Activated naive CD4-positive, alpha-beta T cell treated with anti-CD3 and anti-CD28 coated beads for 36 hours (primary cell): ENCODE measurements at regions of chr1 and their contacts with region 1.

Region 1: DNA sequence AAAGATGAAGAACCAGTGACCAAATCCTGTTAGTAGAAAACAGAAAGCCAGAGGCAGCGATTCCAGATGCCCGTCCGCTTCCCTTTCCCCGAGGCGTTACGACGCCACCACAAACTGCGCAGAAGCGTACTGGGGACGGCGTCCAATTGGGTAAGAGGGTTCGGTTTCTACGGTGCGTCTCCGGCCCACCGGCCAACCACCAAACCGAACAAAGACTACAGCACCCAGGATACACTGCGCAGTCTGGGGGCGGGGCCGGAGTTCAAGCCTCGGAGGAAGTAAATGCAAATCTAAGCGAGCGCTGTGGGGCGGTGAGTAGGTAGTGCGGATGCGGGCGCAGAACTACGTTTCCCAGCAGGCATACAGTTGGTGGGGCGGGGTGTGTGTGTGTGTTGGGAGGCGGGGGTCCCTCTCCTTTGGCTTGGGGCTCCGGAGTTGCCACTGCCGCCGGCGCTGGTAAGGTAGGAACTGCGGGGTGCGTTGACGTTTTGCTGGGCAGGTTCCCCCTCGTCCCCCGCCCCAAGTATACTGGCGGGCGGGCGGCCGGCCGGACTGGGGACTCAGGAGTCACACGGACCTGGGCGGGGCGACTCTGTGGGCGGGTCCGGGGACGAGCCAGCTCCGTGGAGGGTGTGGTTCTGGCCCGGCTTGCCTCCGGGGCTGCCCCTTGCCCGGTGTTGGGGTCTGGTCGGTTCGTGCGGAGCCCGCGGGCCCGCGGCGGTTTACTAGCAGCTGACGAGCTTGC is at the starts of genes SWT1 and TRMT1L:
- DNase-seq: peak; percentile 98
- H3K4me3 Mint-ChIP-seq: peak within 1 kb of the TSS; percentile 92
- H3K27ac Mint-ChIP-seq: peak within 1 kb of the TSS; percentile 91
- H3K4me1 Mint-ChIP-seq: peaks cover 44% of the 10 kb centered on the region
- H3K27me3 Mint-ChIP-seq: no peaks in the 10 kb centered on the region
- total RNA-seq, gene SWT1: 1.7 to 2.9 TPM
- total RNA-seq, gene TRMT1L: 26.6 to 28.7 TPM

Region 2: DNA sequence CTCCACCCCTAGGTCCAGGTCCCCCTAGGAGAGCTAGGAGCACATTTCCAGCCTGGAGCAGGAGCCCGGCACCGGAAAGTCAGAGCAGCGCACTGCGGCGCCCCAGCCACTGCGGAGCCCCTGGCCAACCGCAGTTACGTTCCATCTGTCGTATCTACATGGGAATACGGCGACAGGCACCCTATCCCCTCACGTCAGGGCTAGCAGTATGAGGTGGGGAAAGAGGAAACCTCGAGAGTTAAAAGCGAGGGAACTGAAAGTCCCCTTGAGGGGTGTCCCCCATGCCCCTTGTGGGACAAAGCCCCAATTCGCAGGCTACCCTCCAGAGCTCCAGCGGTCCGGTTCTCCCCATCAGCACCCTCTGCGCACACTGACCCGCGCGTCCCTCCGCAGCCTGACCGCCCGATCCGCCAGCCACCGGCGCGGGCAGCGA is 1120.5 kb before region 1 on chr1:
- CTCF ChIA-PET with region 1: no interaction called
- intact Hi-C with region 1: loop called (anchors 5 kb)
- DNase-seq: peak; percentile 23
- H3K4me3 Mint-ChIP-seq: peak overlapping the region; percentile 58
- H3K27ac Mint-ChIP-seq: no peak overlapping the region
- H3K4me1 Mint-ChIP-seq: peaks cover 15% of the 10 kb centered on the region
- H3K27me3 Mint-ChIP-seq: peaks cover 68% of the 10 kb centered on the region

Region 3: GRCh38 chr1:184805667-184806295 is 351.2 kb before region 1 on chr1:
- CTCF ChIA-PET with region 1: interaction called, 6 read pairs
- intact Hi-C with region 1: loop called (anchors 5 kb)
- DNase-seq: peak; percentile 90
- H3K4me3 Mint-ChIP-seq: no peak overlapping the region
- H3K27ac Mint-ChIP-seq: peak overlapping the region; percentile 6
- H3K4me1 Mint-ChIP-seq: peaks cover 2% of the 10 kb centered on the region
- H3K27me3 Mint-ChIP-seq: no peaks in the 10 kb centered on the region

Region 4: DNA sequence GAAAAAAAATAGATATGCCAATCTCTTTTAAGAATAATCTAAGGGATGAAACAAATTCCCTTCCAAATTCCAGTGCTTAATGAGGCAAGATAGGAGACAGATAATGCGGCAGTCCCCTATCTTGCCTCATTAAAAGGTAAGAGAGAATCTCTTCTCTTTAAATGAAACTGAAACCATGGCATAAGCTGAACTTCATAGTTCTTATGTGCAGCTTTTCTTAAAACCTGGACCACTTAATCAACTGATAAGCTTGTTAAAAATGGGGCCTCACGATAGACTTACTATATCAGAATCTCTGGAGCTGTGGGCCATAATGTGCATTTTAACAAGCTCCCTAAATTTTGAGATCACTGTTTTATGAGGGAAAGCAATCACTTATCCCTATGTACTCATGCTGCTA is 261.9 kb before region 1 on chr1:
- CTCF ChIA-PET with region 1: no interaction called
- intact Hi-C with region 1: no loop called
- DNase-seq: no peak
- H3K4me3 Mint-ChIP-seq: no peak overlapping the region
- H3K27ac Mint-ChIP-seq: no peak overlapping the region
- H3K4me1 Mint-ChIP-seq: peaks cover 24% of the 10 kb centered on the region
- H3K27me3 Mint-ChIP-seq: peaks cover 9% of the 10 kb centered on the region

Region 5: GRCh38 chr1:185044981-185045813 is 111.8 kb before region 1 on chr1 and contains the start of gene RNF2:
- CTCF ChIA-PET with region 1: no interaction called
- intact Hi-C with region 1: loop called (anchors 1 kb)
- DNase-seq: peak; percentile 83
- H3K4me3 Mint-ChIP-seq: peak within 1 kb of the TSS; percentile 89
- H3K27ac Mint-ChIP-seq: peak within 1 kb of the TSS; percentile 69
- H3K4me1 Mint-ChIP-seq: peaks cover 30% of the 10 kb centered on the region
- H3K27me3 Mint-ChIP-seq: no peaks in the 10 kb centered on the region
- total RNA-seq, gene RNF2: 19.2 to 23.4 TPM

Region 6: DNA sequence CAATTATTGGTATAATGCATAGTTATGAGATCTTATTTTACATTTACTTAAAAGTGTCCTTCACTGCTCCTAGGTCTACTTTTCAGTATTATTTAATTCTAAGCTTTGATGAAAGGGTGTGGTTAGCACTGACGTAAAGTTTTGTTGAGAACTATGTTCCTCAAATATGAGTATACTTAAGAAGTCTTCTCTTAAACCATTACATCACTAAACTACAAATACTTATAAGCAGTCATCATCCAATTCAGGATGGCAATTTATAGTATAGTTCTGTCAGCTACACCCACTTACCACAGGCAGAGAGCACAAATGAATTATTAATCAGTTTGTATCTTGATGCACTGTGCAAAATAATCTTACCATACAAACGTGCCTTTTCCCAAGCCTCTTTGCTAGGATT is 27.3 kb before region 1 on chr1:
- CTCF ChIA-PET with region 1: no interaction called
- intact Hi-C with region 1: no loop called
- DNase-seq: no peak
- H3K4me3 Mint-ChIP-seq: no peak overlapping the region
- H3K27ac Mint-ChIP-seq: no peak overlapping the region
- H3K4me1 Mint-ChIP-seq: no peaks in the 10 kb centered on the region
- H3K27me3 Mint-ChIP-seq: no peaks in the 10 kb centered on the region

Region 7: GRCh38 chr1:185208626-185209180 is 51.7 kb after region 1 on chr1:
- CTCF ChIA-PET with region 1: no interaction called
- intact Hi-C with region 1: no loop called
- DNase-seq: no peak
- H3K4me3 Mint-ChIP-seq: no peak overlapping the region
- H3K27ac Mint-ChIP-seq: no peak overlapping the region
- H3K4me1 Mint-ChIP-seq: no peaks in the 10 kb centered on the region
- H3K27me3 Mint-ChIP-seq: no peaks in the 10 kb centered on the region

Region 8: DNA sequence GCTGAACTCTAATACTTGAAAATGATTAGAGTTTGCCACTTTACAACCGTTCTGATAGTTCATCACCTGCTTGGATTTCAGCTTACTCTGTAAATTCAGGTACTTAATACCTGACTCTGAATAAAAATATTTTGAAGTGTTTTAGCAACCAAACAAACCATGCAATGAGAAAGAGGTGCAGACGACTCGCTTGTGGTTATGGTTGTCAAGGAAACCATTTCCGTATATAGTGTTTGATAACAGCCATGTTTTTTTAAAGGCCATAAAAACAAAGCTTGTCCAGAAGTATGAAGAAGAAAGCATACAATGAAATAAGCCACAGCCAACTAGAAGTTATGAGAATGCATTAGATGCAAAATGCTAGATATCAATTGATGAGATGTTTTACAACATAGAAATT is 410.0 kb after region 1 on chr1:
- CTCF ChIA-PET with region 1: no interaction called
- intact Hi-C with region 1: loop called (anchors 2 kb)
- DNase-seq: peak; percentile 57
- H3K4me3 Mint-ChIP-seq: no peak overlapping the region
- H3K27ac Mint-ChIP-seq: peak overlapping the region; percentile 70
- H3K4me1 Mint-ChIP-seq: peaks cover 68% of the 10 kb centered on the region
- H3K27me3 Mint-ChIP-seq: no peaks in the 10 kb centered on the region

Region 9: GRCh38 chr1:186375088-186375953 is 1218.3 kb after region 1 on chr1 and contains the starts of genes ODR4 and TPR:
- CTCF ChIA-PET with region 1: no interaction called
- intact Hi-C with region 1: loop called (anchors 1 kb)
- DNase-seq: peak; percentile 98
- H3K4me3 Mint-ChIP-seq: peak within 1 kb of the TSS; percentile 98
- H3K27ac Mint-ChIP-seq: peak within 1 kb of the TSS; percentile 95
- H3K4me1 Mint-ChIP-seq: peaks cover 38% of the 10 kb centered on the region
- H3K27me3 Mint-ChIP-seq: no peaks in the 10 kb centered on the region
- total RNA-seq, gene ODR4: 13.0 to 15.5 TPM
- total RNA-seq, gene TPR: 217 to 226 TPM